ENCODE measurements at regions of chr4 and their contacts with region 1.

Region 1: GRCh38 chr4:174631901-174632758 is 109.8 kb upstream of the HPGD start:
- DNase-seq: peak; percentile 71
- H3K4me3 Mint-ChIP-seq: no peak overlapping the region
- H3K27ac Mint-ChIP-seq: no peak overlapping the region
- H3K4me1 Mint-ChIP-seq: no peaks in the 10 kb centered on the region
- H3K27me3 Mint-ChIP-seq: no peaks in the 10 kb centered on the region
- CTCF ChIP-seq: peak; percentile 62

Region 2: DNA sequence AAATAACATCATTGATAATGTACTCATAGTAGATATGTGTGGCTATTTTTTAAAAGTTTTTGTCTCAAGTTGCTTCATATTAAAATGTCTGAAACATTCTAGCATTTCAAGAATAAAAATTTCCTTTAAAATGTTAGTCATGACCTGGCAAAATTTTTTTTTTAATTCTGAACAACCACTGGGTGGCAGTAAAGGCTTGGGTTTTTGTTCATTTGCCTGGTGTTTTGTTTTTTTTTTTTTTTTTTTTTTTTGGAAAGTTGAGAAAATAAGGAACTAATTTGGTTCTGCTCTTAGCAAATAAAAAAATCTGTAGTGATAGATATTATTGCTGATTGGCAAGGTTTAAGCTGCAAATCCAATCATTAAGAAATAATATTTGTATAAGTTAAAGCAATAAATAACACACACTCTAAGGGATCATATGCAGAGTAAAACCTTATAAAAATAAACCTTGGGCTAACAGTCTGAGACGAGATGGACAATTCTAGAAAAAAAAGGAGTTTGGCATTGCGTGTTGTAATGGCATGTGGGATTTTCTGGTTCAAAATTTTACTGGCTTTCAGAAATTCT is 267.0 kb before region 1 on chr4:
- CTCF ChIA-PET with region 1: interaction called, 11 read pairs
- POLR2A ChIA-PET with region 1: interaction called, 4 read pairs
- intact Hi-C with region 1: loop called (anchors 1 kb)
- DNase-seq: peak; percentile 54
- H3K4me3 Mint-ChIP-seq: no peak overlapping the region
- H3K27ac Mint-ChIP-seq: no peak overlapping the region
- H3K4me1 Mint-ChIP-seq: no peaks in the 10 kb centered on the region
- H3K27me3 Mint-ChIP-seq: no peaks in the 10 kb centered on the region
- CTCF ChIP-seq: peak; percentile 41

Region 3: GRCh38 chr4:174377613-174378012 is 254.5 kb before region 1 on chr4:
- CTCF ChIA-PET with region 1: interaction called, 10 read pairs
- POLR2A ChIA-PET with region 1: no interaction called
- intact Hi-C with region 1: no loop called
- DNase-seq: no peak
- H3K4me3 Mint-ChIP-seq: no peak overlapping the region
- H3K27ac Mint-ChIP-seq: no peak overlapping the region
- H3K4me1 Mint-ChIP-seq: no peaks in the 10 kb centered on the region
- H3K27me3 Mint-ChIP-seq: no peaks in the 10 kb centered on the region
- CTCF ChIP-seq: no peak

Region 4: GRCh38 chr4:176622251-176622948 is 1990.3 kb after region 1 on chr4:
- CTCF ChIA-PET with region 1: no interaction called
- POLR2A ChIA-PET with region 1: no interaction called
- intact Hi-C with region 1: no loop called
- DNase-seq: peak; percentile 77
- H3K4me3 Mint-ChIP-seq: no peak overlapping the region
- H3K27ac Mint-ChIP-seq: peak overlapping the region; percentile 70
- H3K4me1 Mint-ChIP-seq: peaks cover 10% of the 10 kb centered on the region
- H3K27me3 Mint-ChIP-seq: no peaks in the 10 kb centered on the region
- CTCF ChIP-seq: no peak